ACHN (cell line): ENCODE measurements at regions of chr14 and their contacts with region 1.

Region 1: GRCh38 chr14:91177073-91178034 is 63.5 kb downstream of the DGLUCY start:
- DNase-seq: peak; percentile 59

Region 2: GRCh38 chr14:90903101-90903500 is 274.3 kb before region 1 on chr14:
- in situ Hi-C with region 1: loop called (anchors 25 kb)
- DNase-seq: peak; percentile 60

Region 3: DNA sequence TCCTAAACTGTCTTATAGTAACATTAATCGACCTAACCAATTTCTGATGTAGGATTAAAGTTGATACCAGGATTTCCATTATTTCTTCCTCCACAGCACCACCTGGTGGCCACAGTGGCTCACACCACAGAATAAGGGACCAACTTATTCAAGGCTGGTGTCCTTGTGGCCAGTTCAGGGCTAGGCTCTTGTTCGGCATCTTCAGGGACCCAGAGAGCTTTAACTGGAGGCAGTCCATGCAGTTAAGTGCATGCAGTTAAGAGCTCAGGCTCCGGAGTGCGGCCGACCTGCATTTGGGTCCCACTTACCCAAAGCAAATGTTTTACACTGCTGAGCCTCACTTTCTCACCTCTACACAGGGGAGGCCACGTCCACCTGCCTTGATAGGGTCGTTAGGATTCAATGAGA is 109.2 kb after region 1 on chr14:
- in situ Hi-C with region 1: loop called (anchors 25 kb)
- DNase-seq: peak; percentile 70

Region 4: DNA sequence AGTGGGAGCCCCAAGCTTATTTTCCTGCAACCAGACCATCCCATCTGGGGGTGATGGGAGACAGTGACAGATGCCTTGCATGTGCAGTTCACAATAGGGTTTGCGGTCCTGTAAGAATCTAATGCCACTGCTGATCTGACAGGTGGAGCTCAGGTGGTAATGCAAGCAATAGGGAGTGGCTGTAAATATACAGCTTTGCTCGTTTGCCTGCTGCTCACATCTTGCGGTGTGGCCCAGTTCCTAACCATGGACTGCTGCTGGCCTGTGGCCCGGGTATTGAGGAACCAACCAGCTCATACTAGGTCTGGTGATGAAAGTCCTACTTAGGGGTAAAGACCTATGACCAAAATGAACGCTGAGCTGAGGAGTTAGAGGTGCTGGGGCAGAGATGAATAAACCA is 276.4 kb after region 1 on chr14:
- in situ Hi-C with region 1: no loop called
- DNase-seq: no peak